Activated T-helper 1 cell treated with anti-CD3 and anti-CD28 coated beads, Interleukin-12 subunit alpha, Interleukin-12 subunit beta, Interleukin-2, Interleukin-4 antibody, amounts not matched to agents 30 ng/mL and 10 ng/mL and 1 ng/mL, durations not matched to agents 14 hours and 24 hours and 36 hours (primary cell): ENCODE measurements at regions of chr19 and their contacts with region 1.

Region 1: DNA sequence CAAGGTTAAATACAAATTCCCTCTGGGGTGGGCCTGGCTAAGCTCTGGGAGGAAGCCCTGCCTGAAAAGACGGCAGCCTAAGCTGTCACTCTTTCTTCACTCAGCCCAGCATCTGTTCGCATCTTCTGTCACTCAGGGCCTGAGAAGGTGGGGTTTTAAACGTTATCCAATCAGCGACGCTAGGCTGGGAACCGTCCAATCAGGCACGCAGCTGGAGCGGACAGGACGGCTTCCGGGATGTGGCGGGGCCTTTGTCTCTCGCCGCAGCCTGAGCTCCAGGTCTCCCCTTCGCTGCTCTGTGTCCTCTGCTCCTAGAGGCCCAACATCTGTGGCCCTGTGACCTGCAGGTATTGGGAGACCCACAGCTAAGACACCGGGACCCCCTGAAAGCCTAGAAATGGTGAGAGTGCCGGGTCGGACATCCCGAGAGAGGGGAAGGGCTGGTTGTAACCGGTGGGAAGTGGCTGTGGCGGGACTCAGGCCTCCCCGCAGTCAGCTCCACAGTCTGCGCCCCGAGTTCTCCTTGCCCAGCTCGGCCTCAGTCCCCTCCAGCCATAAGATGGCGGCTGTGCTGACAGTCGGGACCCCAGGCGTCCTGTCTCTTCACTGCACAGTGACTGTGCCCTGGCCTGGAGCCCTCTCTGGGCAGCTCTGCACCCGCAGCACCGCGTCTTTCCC is at the start of gene ZNF431:
- DNase-seq: peak; percentile 85
- H3K4me3 Mint-ChIP-seq: peak within 1 kb of the TSS; percentile 96
- H3K27ac Mint-ChIP-seq: peak within 1 kb of the TSS; percentile 91
- H3K4me1 Mint-ChIP-seq: peaks cover 25% of the 10 kb centered on the region
- H3K27me3 Mint-ChIP-seq: no peaks in the 10 kb centered on the region
- total RNA-seq, gene ZNF431: 16.0 and 16.8 TPM in 2 replicates

Region 2: GRCh38 chr19:20423381-20424197 is 718.3 kb before region 1 on chr19:
- intact Hi-C with region 1: loop called (anchors 10 kb)
- DNase-seq: peak; percentile 4
- H3K4me3 Mint-ChIP-seq: peak overlapping the region; percentile 94
- H3K27ac Mint-ChIP-seq: peak overlapping the region; percentile 97
- H3K4me1 Mint-ChIP-seq: no peaks in the 10 kb centered on the region
- H3K27me3 Mint-ChIP-seq: no peaks in the 10 kb centered on the region

Region 3: DNA sequence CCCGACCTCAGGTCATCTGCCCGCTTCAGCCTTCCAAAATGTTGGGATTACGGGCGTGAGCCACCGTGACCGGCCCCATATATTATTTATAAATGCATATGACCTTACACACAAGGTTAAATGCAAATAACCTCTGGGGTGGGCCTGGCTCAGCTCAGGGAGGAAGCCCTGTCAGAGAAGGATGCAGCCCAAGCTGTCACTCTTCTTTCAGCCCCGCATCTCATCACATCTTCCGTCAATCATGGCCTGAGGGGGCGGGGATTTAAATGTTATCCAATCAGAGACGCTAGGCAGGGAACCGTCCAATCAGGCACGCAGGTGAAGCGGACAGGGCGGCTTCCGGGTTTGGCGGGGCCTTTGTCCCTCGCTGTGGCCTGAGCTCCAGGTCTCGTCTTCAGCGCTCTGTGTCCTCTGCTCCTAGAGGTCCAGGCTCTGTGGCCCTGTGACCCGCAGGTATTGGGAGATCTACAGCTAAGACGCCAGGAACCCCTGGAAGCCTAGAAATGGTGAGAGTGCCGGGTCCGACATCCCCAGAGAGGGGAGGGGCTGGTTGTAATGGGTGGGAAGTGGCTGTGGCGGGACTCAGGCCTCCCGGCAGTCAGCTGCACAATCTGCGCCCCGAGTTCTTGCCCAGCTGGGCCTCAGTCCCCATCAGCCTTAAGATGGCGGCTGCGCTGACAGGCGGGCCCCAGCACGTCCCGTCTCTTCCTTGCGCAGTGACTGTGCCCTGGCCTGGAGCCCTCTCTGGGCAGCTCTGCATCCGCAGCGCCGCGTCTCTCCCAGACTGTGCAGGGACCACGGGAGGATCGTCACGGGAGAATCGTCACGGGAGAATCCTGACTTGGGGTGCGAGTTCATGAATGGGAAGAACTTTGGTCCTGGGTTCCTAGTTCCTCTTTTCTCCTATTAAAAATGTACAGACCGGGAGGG is 121.4 kb before region 1 on chr19 and contains the start of gene ZNF430:
- intact Hi-C with region 1: loop called (anchors 1 kb)
- DNase-seq: peak; percentile 93
- H3K4me3 Mint-ChIP-seq: peak within 1 kb of the TSS; percentile 99
- H3K27ac Mint-ChIP-seq: peak within 1 kb of the TSS; percentile 98
- H3K4me1 Mint-ChIP-seq: peaks cover 26% of the 10 kb centered on the region
- H3K27me3 Mint-ChIP-seq: peaks cover 2% of the 10 kb centered on the region
- total RNA-seq, gene ZNF430: 20.3 and 21.5 TPM in 2 replicates

Region 4: DNA sequence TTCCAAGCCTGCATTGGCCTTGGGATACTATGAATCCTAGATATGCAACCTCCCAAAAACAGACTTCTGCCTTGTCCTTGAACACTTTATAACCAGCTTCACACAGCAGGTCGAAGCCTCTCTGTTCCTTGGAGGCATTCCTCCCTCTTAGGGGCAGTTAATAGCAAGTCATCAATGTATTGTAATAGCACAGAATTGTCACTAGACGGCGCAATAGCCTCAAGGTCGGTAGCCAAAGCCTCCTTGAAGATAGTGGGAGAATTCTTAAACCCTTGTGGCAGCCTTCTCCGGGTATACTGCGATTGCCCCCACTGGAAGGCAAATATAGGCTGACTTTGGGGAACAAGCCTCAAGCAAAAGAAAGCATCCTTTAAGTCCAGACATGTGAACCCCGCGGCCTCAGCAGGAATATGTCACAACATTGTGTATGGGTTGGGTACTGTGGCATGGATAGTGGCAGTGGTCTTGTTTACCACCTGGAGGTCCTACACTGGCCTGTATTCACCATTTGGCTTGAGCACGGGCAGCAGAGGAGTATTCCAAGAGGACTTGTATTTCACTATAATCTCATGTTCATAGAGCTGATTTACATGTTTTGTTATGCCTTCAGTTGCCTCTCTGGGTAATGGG is 61.1 kb after region 1 on chr19:
- intact Hi-C with region 1: no loop called
- DNase-seq: no peak
- H3K4me3 Mint-ChIP-seq: no peak overlapping the region
- H3K27ac Mint-ChIP-seq: no peak overlapping the region
- H3K4me1 Mint-ChIP-seq: no peaks in the 10 kb centered on the region
- H3K27me3 Mint-ChIP-seq: no peaks in the 10 kb centered on the region